A673 (cell line): ENCODE measurements at regions of chr11 and their contacts with region 1.

Region 1: GRCh38 chr11:66371627-66372415 is at the start of gene SLC29A2:
- DNase-seq: peak; percentile 98
- H3K4me3 ChIP-seq: peak within 1 kb of the TSS; percentile 93
- H3K27ac ChIP-seq: peak within 1 kb of the TSS; percentile 83
- H3K4me1 ChIP-seq: peaks cover 30% of the 10 kb centered on the region
- H3K27me3 ChIP-seq: no peaks in the 10 kb centered on the region
- CTCF ChIP-seq: no peak
- total RNA-seq, gene SLC29A2: 60.4 and 62.4 TPM in 2 replicates

Region 2: DNA sequence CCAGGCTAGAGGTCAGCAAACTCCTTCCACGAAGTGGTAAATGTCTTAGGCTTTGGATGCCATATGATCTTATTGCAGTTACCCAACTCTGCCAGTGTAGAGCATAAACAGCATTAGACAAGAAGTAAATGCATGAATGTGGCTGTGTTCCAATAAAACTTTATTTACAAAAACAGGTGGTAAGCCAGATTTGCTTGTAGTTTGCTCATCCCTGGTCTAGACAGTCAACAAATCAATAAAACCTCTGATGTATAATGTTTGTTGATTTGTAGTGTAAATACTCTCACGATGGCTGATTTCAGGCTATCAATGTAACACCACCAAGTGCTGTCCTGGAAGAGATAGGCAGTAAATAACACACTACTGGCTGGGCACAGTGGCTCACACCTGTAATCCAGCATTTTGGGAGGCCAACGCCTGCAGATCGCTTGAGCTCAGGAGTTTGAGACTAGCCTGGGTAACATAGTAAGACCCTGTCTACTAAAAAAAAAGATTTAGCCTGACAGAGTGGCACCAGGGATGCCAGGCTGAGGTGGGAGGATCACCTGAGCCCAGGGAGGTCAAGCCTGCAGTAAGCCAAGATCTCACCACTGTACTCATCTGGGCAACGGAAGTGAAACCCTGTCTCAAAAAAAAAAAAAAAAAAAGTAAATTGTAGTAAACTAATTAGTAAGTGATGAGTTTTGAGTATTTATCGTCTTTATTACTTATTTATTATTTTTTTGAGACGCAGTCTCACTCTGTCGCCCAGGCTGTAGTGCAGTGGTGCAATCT is 338.7 kb before region 1 on chr11:
- CTCF ChIA-PET with region 1: no interaction called
- POLR2A ChIA-PET with region 1: no interaction called
- intact Hi-C with region 1: no loop called
- DNase-seq: no peak
- H3K4me3 ChIP-seq: no peak overlapping the region
- H3K27ac ChIP-seq: no peak overlapping the region
- H3K4me1 ChIP-seq: no peaks in the 10 kb centered on the region
- H3K27me3 ChIP-seq: no peaks in the 10 kb centered on the region
- CTCF ChIP-seq: no peak

Region 3: DNA sequence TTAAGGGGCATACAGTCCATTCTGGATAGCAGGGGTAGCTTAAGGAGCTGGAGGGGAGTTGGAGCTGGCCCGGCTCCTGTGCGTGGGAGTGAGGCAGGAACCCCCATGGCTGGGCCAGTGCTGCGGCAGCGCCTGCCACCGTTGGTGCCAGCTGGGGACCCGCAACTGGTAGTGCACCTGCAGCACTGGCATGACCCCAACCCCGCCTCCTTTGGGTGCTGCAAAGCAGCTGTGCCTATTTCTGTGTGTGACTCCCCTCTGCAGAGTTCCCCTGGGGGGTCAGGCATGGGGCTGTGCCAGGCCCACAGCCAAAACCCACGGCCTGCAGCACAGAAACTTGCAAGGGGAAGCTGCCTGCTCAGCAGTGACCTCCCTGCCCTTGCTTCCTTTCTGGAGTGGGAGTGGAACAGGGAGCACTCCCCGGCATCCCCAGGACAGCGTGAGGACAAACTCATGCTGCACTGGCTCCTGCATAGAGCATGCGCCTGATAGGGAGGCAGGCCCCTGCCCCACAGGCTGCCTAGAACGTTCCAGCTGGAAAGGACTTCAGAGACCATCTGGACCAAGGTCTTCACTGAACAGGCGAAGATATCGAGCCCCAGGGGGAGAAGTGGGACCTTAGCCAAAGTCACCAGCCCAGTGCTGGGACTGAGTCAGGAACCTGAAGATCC is 129.6 kb before region 1 on chr11:
- CTCF ChIA-PET with region 1: no interaction called
- POLR2A ChIA-PET with region 1: no interaction called
- intact Hi-C with region 1: no loop called
- DNase-seq: no peak
- H3K4me3 ChIP-seq: no peak overlapping the region
- H3K27ac ChIP-seq: no peak overlapping the region
- H3K4me1 ChIP-seq: no peaks in the 10 kb centered on the region
- H3K27me3 ChIP-seq: no peaks in the 10 kb centered on the region
- CTCF ChIP-seq: no peak

Region 4: DNA sequence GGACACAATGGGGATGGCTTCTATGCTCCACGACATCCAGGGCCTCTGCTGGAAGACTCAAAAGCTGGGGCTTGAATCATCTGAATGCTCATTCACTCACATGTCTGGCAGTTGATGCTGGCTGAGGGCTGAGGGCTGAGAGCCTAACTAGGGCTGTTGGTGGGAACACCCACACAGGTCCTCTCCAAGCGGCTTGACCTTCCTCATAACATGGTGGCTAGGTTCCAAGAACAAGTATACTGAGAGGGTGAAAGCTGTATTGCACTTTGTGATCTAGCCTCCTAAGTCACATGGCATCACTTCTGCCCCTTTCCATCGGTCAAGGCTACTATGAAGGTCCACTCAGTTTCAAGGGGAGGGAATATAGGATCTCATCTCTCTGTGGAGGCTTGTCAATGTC is 72.6 kb before region 1 on chr11:
- CTCF ChIA-PET with region 1: no interaction called
- POLR2A ChIA-PET with region 1: no interaction called
- intact Hi-C with region 1: no loop called
- DNase-seq: no peak
- H3K4me3 ChIP-seq: no peak overlapping the region
- H3K27ac ChIP-seq: no peak overlapping the region
- H3K4me1 ChIP-seq: no peaks in the 10 kb centered on the region
- H3K27me3 ChIP-seq: no peaks in the 10 kb centered on the region
- CTCF ChIP-seq: no peak

Region 5: DNA sequence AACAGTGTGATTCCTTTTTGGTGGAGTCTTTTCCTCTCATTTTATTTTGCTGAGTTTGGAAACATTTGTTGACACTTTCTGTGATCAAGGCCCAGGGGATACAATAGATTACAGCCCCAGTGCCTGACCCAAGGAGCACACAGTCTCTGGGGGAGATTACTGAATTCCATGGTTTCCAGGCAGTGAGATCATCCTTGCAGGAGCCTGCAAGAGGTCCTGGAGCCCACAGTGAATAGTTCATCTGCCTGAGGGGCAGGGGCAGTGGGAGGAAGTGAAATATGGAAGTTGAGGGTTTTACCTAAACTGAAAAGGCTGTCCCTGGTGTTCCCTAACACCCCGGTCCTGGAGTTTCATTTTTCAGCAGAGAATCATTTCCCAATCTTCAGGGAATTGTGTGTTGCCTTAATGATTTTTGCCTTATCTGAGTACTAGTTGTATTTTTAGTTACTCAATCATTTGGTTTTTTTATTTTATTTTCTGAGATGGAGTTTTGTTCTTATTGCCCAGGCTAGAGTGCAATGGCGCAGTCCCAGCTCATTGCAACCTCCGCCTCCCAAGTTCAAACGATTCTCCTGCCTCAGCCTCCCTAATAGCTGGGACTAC is 228.9 kb after region 1 on chr11:
- CTCF ChIA-PET with region 1: no interaction called
- POLR2A ChIA-PET with region 1: no interaction called
- intact Hi-C with region 1: no loop called
- DNase-seq: no peak
- H3K4me3 ChIP-seq: no peak overlapping the region
- H3K27ac ChIP-seq: no peak overlapping the region
- H3K4me1 ChIP-seq: peaks cover 1% of the 10 kb centered on the region
- H3K27me3 ChIP-seq: no peaks in the 10 kb centered on the region
- CTCF ChIP-seq: no peak

Region 6: GRCh38 chr11:66848671-66849500 is 477.1 kb after region 1 on chr11:
- CTCF ChIA-PET with region 1: no interaction called
- POLR2A ChIA-PET with region 1: interaction called, 10 read pairs
- intact Hi-C with region 1: no loop called
- DNase-seq: no peak
- H3K4me3 ChIP-seq: no peak overlapping the region
- H3K27ac ChIP-seq: no peak overlapping the region
- H3K4me1 ChIP-seq: peaks cover 8% of the 10 kb centered on the region
- H3K27me3 ChIP-seq: no peaks in the 10 kb centered on the region
- CTCF ChIP-seq: no peak